ENCODE measurements at regions of chr13 and their contacts with region 1.

Region 1: DNA sequence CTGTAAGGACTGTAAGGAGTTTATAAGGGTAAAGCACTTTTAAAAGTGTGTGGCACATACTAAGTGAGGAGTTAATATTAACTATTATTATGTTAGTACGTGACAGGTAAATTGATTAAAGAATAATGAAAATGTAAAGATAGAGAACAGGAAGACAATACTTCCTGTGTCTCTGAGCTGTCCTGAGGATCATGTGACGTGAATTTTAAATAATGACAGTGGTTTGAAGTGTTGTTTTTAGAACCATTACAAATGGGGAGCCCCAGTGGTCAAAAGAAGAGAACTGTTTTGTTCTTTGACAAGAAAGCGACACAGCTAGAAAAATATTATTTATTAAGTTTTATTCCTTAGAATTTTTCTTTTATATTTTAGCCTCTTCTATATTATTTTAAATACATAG is 241.2 kb upstream of the STARD13 start:
- DNase-seq: no peak
- H3K4me3 ChIP-seq: no peak overlapping the region
- H3K27ac ChIP-seq: no peak overlapping the region
- H3K4me1 ChIP-seq: no peaks in the 10 kb centered on the region
- H3K27me3 ChIP-seq: no peaks in the 10 kb centered on the region
- CTCF ChIP-seq: no peak
- POLR2A ChIP-seq: no peak

Region 2: GRCh38 chr13:33487575-33488243 is 39.0 kb before region 1 on chr13:
- CTCF ChIA-PET with region 1: no interaction called
- POLR2A ChIA-PET with region 1: no interaction called
- dilution Hi-C with region 1: no loop called
- intact Hi-C with region 1: no loop called
- DNase-seq: peak; percentile 31
- H3K4me3 ChIP-seq: no peak overlapping the region
- H3K27ac ChIP-seq: no peak overlapping the region
- H3K4me1 ChIP-seq: peaks cover 20% of the 10 kb centered on the region
- H3K27me3 ChIP-seq: no peaks in the 10 kb centered on the region
- CTCF ChIP-seq: peak in 1 of 2 donors; percentile 20
- POLR2A ChIP-seq: no peak

Region 3: GRCh38 chr13:33537026-33537425 is 10.3 kb after region 1 on chr13:
- CTCF ChIA-PET with region 1: interaction called, 13 read pairs
- POLR2A ChIA-PET with region 1: no interaction called
- dilution Hi-C with region 1: no loop called
- intact Hi-C with region 1: no loop called
- DNase-seq: no peak
- H3K4me3 ChIP-seq: no peak overlapping the region
- H3K27ac ChIP-seq: no peak overlapping the region
- H3K4me1 ChIP-seq: peaks cover 10% of the 10 kb centered on the region
- H3K27me3 ChIP-seq: no peaks in the 10 kb centered on the region
- CTCF ChIP-seq: no peak
- POLR2A ChIP-seq: no peak

Measured in endothelial cell of umbilical vein (primary cell).